PC-9 (cell line): ENCODE measurements at regions of chr12 and their contacts with region 1.

Region 1: DNA sequence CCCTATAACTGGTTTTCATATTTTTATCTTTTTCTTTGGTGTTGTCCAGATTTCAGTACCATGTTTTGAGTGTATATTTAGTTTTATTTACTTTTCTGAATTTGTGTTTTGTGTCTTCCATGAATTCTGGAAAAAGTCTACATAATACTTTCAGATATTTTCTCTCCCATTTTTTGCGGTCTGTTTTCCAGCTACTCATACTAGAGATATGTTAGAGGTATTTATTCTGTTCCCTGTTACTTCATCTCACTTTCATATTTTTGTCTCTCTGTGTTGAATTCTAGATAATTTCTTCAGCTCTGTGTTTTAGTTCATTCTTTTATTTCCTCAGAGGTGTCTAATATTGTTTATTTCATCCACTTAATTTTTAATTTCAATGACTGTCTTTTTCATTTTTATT is 74.2 kb downstream of the IFT81 start:
- DNase-seq: no peak
- H3K4me3 ChIP-seq: no peak overlapping the region
- H3K27ac ChIP-seq: no peak overlapping the region
- H3K4me1 ChIP-seq: no peaks in the 10 kb centered on the region
- H3K27me3 ChIP-seq: no peaks in the 10 kb centered on the region
- CTCF ChIP-seq: no peak

Region 2: DNA sequence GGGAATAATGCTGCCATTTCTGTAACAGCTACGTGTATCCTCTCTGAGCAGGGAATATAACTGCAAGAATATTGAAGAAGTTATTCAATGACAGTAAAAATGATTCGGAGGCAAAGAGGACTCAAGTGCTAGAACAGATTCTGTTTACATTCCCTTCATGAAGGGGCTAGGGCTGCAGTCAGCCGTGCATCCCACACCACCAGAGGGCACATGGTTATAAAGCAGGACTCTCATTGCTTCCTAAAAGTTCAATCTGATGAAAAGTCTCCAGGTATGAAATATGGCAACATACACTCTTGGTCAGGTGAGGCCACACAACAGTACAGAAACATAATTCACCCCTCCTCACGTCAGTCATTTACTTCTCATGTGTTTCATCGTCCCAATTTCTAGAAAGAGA is 264.4 kb before region 1 on chr12:
- CTCF ChIA-PET with region 1: no interaction called
- POLR2A ChIA-PET with region 1: interaction called, 13 read pairs
- intact Hi-C with region 1: no loop called
- DNase-seq: peak in 1 of 2 experiments; percentile 28
- H3K4me3 ChIP-seq: no peak overlapping the region
- H3K27ac ChIP-seq: no peak overlapping the region
- H3K4me1 ChIP-seq: 0 out of 2 replicates have a peak, but pooled peaks cover 3% of the 10 kb centered on the region
- H3K27me3 ChIP-seq: no peaks in the 10 kb centered on the region
- CTCF ChIP-seq: peak; percentile 50; the same call in 1 of the 2 replicates